RWPE1 (cell line): ENCODE measurements at regions of chr6 and their contacts with region 1.

Region 1: DNA sequence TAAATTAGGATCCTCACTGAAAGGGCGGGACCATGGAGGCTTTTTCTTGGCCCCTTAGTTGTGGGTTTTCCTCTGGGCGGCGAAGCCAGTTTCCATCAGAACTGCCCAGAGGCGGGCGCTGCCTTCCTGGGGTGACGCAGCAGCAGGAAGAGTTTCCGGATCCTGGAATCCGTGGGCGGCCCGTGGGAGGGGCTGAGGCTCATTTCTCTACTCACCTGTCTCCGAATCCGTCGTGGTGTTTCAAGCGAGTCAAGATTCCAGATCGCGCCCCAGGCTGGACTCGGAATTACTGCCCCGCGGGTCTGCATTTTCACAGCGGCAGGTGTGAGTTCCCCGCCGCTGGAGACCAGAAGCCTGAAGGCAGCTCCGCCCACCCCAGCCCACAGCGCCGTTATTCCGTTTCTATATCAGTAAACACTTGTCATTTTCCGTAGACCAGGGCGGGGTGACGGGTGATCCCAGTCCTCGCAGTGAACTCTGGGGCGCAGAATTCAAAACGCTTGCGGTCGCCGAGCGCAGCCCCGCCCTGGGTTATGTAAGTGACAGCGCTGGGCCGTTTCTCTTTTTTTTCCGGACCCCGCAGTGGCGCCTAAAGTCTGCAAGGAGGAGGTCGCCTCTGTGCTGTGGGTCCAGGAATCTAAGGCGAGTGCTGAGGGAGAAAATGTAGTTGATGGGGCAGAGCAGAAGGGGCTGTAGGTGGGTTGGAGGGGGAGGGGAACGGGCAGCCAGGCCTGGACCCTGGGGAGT is 27.2 kb upstream of the POU5F1 start:
- DNase-seq: peak; percentile 78
- H3K27ac ChIP-seq: peak overlapping the region; percentile 97
- CTCF ChIP-seq: no peak

Region 2: DNA sequence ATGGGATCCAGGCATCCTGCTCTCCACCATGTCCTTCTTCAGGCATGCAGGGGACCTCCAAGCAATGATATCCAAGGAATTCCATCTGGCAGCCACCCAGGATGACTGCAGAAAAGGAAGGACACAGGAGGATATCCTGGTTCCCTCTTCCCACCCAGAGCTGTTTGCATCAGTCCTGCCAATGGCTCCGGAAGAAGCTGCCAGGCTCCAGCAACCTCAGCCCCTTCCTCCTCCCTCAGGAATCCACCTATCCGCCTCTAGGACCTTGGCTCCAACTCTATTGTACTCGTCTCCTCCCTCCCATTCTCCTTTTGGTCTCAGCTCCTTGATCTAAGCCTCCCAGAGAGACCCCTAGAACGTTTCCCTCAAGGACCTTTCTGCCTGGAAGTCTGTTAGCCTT is 58.1 kb before region 1 on chr6:
- CTCF ChIA-PET with region 1: interaction called, 20 read pairs
- POLR2A ChIA-PET with region 1: no interaction called
- DNase-seq: no peak
- H3K27ac ChIP-seq: peak overlapping the region; percentile 39; the same call in 1 of the 2 replicates
- CTCF ChIP-seq: no peak

Region 3: GRCh38 chr6:31366693-31367470 is 169.2 kb after region 1 on chr6:
- CTCF ChIA-PET with region 1: interaction called, 33 read pairs
- POLR2A ChIA-PET with region 1: no interaction called
- DNase-seq: peak; percentile 85
- H3K27ac ChIP-seq: no peak overlapping the region
- CTCF ChIP-seq: peak; percentile 95

Region 4: DNA sequence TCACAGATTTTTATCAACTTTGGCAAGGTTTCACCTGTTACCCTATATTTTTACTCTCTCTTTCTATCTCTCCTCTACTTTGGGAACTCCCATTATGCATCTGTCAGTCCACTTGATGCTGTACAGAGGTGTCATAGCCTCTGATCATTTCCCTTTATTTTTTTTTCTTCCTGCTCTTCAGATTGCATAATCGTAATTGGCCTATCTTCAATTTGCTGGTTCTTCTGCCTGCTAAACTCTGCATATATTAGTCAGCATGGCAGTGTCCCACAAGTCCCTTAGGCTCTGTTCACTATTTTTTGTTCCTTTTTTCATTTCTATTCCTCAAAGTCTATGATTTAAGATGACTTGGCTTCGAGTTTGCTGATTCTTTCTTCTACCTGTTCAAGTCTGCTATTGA is 255.5 kb after region 1 on chr6:
- CTCF ChIA-PET with region 1: no interaction called
- POLR2A ChIA-PET with region 1: no interaction called
- DNase-seq: no peak
- H3K27ac ChIP-seq: no peak overlapping the region
- CTCF ChIP-seq: no peak